ENCODE measurements at regions of chr7 and their contacts with region 1.

Region 1: DNA sequence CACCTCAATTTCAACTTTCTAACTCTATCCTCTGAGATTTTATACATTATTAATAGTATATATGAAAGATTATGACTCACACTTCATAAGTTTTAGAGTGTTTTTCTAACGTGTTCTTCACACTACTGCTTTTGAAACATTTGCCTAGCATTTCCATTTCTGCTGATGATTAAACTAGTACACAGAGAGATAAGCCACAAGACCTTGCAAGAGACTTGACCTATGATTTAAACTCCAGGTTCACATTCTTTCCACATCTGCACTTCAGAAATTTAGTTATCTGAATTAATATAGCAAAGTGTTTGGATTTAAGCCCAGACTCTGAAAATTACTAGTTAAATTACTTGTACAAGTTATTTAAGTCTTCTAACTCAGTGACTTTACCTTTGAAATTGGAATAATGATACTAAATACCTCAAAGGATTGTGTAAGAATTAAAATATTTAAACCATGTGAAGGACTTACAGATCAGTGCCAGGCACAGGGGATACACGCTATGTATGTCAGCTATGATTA is 66.6 kb downstream of the PCLO start:
- DNase-seq: no peak
- H3K4me3 ChIP-seq: no peak overlapping the region
- H3K27ac ChIP-seq: no peak overlapping the region
- H3K4me1 ChIP-seq: no peaks in the 10 kb centered on the region
- H3K27me3 ChIP-seq: no peaks in the 10 kb centered on the region
- CTCF ChIP-seq: no peak

Region 2: GRCh38 chr7:83015916-83016315 is 80.2 kb before region 1 on chr7:
- CTCF ChIA-PET with region 1: no interaction called
- POLR2A ChIA-PET with region 1: no interaction called
- intact Hi-C with region 1: no loop called
- DNase-seq: no peak
- H3K4me3 ChIP-seq: no peak overlapping the region
- H3K27ac ChIP-seq: no peak overlapping the region
- H3K4me1 ChIP-seq: no peaks in the 10 kb centered on the region
- H3K27me3 ChIP-seq: no peaks in the 10 kb centered on the region
- CTCF ChIP-seq: no peak

Region 3: DNA sequence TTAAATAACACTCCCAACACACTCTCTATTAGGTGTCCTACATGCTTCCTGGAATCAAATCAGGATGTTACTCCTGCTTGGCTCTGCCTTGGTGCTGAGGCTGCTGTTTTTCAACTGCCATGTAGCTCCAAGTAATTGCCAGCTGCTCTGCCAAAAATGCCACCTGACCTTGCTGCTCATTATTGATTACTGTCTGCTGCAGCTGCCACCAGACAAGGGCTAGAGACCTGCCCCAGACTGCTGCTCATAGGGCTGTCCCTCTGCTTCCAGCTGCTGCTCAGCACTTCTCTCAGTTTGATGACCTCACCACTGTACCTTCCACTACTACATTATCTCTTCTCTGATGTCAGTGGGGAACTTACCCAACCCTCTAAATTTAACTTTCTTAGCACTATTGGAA is 35.9 kb before region 1 on chr7:
- CTCF ChIA-PET with region 1: no interaction called
- POLR2A ChIA-PET with region 1: no interaction called
- intact Hi-C with region 1: loop called (anchors 1 kb)
- DNase-seq: no peak
- H3K4me3 ChIP-seq: no peak overlapping the region
- H3K27ac ChIP-seq: no peak overlapping the region
- H3K4me1 ChIP-seq: peaks cover 2% of the 10 kb centered on the region; the same call in 1 of the 2 replicates
- H3K27me3 ChIP-seq: no peaks in the 10 kb centered on the region
- CTCF ChIP-seq: no peak

Region 4: DNA sequence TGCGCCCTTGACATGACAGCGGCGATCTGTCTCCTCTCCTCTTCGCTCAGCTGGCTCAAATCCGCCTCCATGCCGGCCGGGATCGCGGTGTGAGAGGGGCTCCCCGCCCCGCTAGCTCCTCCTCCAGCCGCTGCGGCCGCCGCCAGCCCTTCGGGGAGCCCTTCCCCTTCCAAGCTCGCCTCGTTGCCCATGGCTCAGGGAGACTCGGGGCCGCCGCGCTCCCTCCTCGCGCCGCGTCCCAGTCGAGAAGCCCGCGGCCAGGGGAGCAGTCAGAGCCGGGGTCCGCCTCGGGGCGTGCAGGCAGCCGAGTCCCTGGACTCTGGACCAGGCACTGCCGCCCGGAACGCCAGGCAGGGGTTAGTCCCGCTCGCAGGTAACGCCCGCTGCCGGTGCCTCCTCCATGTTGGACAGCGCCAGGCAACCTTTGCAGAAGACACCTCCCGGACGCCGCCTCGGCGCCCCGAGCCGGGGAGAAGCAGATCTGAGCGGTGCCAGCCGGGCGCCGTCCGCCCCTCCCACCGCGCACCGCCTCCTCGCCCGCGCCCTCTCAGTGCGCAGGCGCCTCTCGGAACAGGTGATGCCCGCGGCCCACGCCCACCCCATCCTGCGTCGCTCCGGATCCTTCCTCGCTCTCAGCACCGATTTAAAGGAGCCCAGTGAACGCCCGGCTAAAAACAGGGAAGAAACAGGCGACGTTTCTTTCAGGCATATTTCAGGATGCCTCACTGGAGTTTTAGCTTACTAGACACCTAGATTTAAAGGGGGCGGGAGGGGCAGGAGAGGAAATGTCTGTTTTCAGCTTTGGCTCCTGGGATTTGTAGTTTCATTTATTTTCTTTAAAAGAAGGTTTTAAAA is 66.5 kb after region 1 on chr7 and contains the start of gene PCLO:
- CTCF ChIA-PET with region 1: no interaction called
- POLR2A ChIA-PET with region 1: no interaction called
- intact Hi-C with region 1: no loop called
- DNase-seq: peak; percentile 87 to 98
- H3K4me3 ChIP-seq: peak within 1 kb of the TSS; percentile 98
- H3K27ac ChIP-seq: peak within 1 kb of the TSS; percentile 70
- H3K4me1 ChIP-seq: peaks cover 18% of the 10 kb centered on the region
- H3K27me3 ChIP-seq: no peaks in the 10 kb centered on the region
- CTCF ChIP-seq: no peak
- total RNA-seq, gene PCLO: 2.6 and 4.0 TPM in 2 replicates

Measured in PC-9 (cell line).